Common myeloid progenitor, CD34-positive (primary cell): ENCODE measurements at regions of chr21 and their contacts with region 1.

Region 1: DNA sequence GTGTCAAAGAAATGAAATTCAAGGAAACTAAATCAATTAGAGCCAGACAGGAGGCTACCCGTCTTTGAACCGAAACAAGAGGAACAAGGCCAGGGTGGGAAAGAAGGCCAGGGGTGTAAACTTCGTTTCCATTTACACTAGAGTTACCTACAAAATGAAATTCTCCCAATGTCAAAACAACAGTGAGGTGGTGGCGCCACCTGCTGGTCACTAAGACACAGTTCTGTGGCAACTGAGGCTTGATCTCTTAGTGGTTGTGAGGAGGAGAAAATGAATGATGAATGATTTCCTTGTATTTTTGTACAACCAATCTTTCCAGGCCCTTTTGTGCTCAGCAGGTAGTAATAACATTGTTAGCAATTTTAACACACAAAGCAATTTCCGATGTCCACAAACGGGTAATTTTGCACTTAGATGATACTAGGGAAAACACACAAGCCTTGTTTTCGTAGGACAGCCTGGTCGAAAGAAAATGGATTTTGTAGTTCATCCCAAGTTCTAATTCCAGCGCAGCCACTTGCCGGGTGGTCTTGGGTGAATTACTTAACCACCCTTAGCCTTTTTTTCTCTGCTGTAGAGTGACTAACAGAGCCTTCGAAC is 54.8 kb upstream of the SOD1 start:
- DNase-seq: peak; percentile 64 to 84 (median 78)
- H3K4me3 ChIP-seq: no peak overlapping the region
- H3K27ac ChIP-seq: no peak overlapping the region
- H3K4me1 ChIP-seq: peaks cover 0 to 3% (median under 1%) of the 10 kb centered on the region in 4 experiments
- H3K27me3 ChIP-seq: no peaks in the 10 kb centered on the region

Region 2: GRCh38 chr21:31198575-31198974 is 406.1 kb before region 1 on chr21:
- CTCF ChIA-PET with region 1: interaction called, 29 read pairs
- POLR2A ChIA-PET with region 1: no interaction called
- DNase-seq: peak; percentile 48 to 69 (median 57)
- H3K4me3 ChIP-seq: no peak overlapping the region
- H3K27ac ChIP-seq: no peak overlapping the region
- H3K4me1 ChIP-seq: peaks cover 3 to 22% (median 13%) of the 10 kb centered on the region in 4 experiments
- H3K27me3 ChIP-seq: no peaks in the 10 kb centered on the region

Region 3: DNA sequence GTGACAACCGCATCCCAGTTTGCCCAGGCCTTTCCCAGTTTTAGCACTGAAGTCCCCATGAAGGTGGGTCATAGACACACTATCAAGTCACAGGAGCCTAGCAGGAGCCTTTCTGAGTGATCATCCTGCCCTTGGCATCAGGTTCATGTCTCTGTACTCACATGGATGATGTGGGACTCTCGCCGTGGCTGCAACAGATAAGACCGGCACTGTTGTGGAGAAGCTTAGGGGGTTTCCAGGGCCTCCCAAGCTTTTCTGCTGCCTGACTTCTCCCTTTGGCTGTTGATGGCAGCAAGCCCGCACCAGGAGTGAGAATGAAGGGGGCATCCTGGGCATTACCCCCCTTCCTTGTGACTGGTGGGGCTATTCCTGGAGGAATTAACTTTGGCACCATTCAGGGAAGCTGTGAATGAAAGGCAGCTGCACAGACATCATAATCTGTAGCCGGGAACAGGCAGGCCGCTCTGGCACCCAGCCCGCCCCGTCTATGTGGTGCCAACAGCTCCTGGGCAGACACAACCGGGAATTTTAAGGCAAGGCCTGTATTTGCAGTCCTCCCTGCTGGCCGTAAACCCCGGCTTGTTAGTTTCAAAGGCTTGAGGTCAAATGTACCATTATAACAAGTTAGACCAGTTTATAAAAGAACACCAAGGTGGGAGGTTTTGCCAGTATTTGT is 416.8 kb after region 1 on chr21:
- CTCF ChIA-PET with region 1: no interaction called
- POLR2A ChIA-PET with region 1: no interaction called
- DNase-seq: no peak
- H3K4me3 ChIP-seq: no peak overlapping the region
- H3K27ac ChIP-seq: no peak overlapping the region
- H3K4me1 ChIP-seq: no peaks in the 10 kb centered on the region
- H3K27me3 ChIP-seq: peaks cover 0 to 3% (median 0%) of the 10 kb centered on the region in 5 experiments